ENCODE measurements at regions of chr17 and their contacts with region 1.

Region 1: GRCh38 chr17:37373530-37374159 is 2.1 kb upstream of the C17orf78 start:
- DNase-seq: peak; percentile 73
- H3K4me3 ChIP-seq: no peak overlapping the region
- H3K27ac ChIP-seq: no peak overlapping the region
- H3K4me1 ChIP-seq: no peaks in the 10 kb centered on the region
- H3K27me3 ChIP-seq: no peaks in the 10 kb centered on the region
- CTCF ChIP-seq: peak; percentile 96

Region 2: DNA sequence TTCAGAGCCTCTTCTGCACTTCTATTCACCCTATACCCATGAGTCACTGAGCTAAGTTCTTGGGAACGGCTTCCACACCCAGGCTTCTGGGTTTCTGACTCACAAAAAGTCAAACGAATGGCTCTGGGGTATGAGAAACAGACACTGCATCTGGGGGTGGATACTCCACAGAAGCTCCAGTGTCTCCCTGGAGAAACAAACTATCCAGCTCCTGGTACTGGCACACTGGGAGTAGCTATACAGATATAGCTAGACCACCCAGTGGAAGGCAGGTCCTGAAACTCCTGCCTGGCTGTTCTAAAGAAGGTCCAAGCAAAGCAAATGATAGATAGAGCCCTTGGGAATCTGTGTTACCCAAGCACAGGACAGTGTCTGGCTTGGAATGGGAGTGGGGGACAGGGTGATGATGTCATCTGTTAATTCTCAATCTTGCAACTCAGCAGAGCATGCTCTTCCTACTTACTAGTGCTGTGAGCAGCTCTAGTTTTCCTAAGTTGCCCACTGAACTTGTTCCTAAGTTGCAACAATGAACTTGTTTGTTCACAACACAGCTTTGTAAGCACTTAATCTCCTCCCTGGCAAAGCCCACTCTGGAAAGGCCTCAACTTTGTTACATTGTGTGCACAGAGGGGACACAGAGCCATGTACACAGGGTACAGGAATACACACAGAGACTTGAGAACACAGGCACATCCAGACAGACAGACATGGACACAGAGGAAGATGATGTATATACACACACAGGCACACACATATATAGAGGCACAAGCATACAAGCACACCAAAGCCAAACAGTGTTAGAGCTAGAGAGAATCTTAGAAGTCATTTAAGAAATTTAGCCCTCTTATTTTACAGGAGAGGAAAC is 1584.9 kb before region 1 on chr17:
- CTCF ChIA-PET with region 1: no interaction called
- POLR2A ChIA-PET with region 1: no interaction called
- intact Hi-C with region 1: no loop called
- DNase-seq: peak in 1 of 2 experiments; percentile 85
- H3K4me3 ChIP-seq: no peak overlapping the region; the same call in 1 of the 2 replicates
- H3K27ac ChIP-seq: peak overlapping the region; percentile 80
- H3K4me1 ChIP-seq: peaks cover 66% of the 10 kb centered on the region
- H3K27me3 ChIP-seq: peaks cover 6% of the 10 kb centered on the region; the same call in 1 of the 2 replicates
- CTCF ChIP-seq: no peak

Region 3: GRCh38 chr17:37292429-37293139 is 81.1 kb before region 1 on chr17:
- CTCF ChIA-PET with region 1: no interaction called
- POLR2A ChIA-PET with region 1: no interaction called
- intact Hi-C with region 1: no loop called
- DNase-seq: no peak
- H3K4me3 ChIP-seq: no peak overlapping the region
- H3K27ac ChIP-seq: peak overlapping the region; percentile 9; the same call in 1 of the 2 replicates
- H3K4me1 ChIP-seq: peaks cover 7% of the 10 kb centered on the region; the same call in 1 of the 2 replicates
- H3K27me3 ChIP-seq: no peaks in the 10 kb centered on the region
- CTCF ChIP-seq: no peak

Region 4: GRCh38 chr17:37392024-37392590 is 18.5 kb after region 1 on chr17:
- CTCF ChIA-PET with region 1: interaction called, 4 read pairs
- POLR2A ChIA-PET with region 1: no interaction called
- intact Hi-C with region 1: loop called (anchors 2 kb)
- DNase-seq: peak; percentile 20 to 92
- H3K4me3 ChIP-seq: peak overlapping the region; percentile 37; the same call in 1 of the 2 replicates
- H3K27ac ChIP-seq: peak overlapping the region; percentile 80
- H3K4me1 ChIP-seq: peaks cover 21% of the 10 kb centered on the region
- H3K27me3 ChIP-seq: no peaks in the 10 kb centered on the region
- CTCF ChIP-seq: no peak

Region 5: GRCh38 chr17:37447641-37448040 is 74.0 kb after region 1 on chr17:
- CTCF ChIA-PET with region 1: no interaction called
- POLR2A ChIA-PET with region 1: no interaction called
- intact Hi-C with region 1: no loop called
- DNase-seq: peak; percentile 16 to 76
- H3K4me3 ChIP-seq: no peak overlapping the region
- H3K27ac ChIP-seq: peak overlapping the region; percentile 81
- H3K4me1 ChIP-seq: peaks cover 54% of the 10 kb centered on the region
- H3K27me3 ChIP-seq: no peaks in the 10 kb centered on the region
- CTCF ChIP-seq: no peak

Region 6: DNA sequence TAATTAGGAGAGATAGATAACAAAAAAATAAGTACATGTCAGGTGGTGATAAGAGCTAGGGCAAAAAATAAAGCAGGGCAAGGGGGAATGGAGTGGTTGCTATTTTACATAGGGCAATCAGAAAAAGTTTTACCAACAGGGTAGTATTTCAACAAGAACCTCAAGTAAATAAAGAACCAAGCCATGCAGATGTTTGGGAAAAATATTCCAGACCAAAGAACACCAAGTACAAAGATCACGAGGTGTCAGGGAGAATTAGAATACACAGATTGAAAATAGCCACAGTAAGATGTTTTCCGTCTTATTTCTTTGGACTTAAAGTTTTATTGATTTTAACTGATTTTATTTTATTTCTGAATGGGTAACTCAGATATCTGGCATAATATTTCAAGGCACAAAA is 224.5 kb after region 1 on chr17:
- CTCF ChIA-PET with region 1: no interaction called
- POLR2A ChIA-PET with region 1: no interaction called
- intact Hi-C with region 1: no loop called
- DNase-seq: no peak
- H3K4me3 ChIP-seq: no peak overlapping the region
- H3K27ac ChIP-seq: no peak overlapping the region
- H3K4me1 ChIP-seq: no peaks in the 10 kb centered on the region
- H3K27me3 ChIP-seq: no peaks in the 10 kb centered on the region
- CTCF ChIP-seq: no peak

Measured in PC-9 (cell line).